Endothelial cell of umbilical vein (primary cell): ENCODE measurements at regions of chr7 and their contacts with region 1.

Region 1: GRCh38 chr7:50826371-50827172 is 43.9 kb upstream of the GRB10 start:
- DNase-seq: peak; percentile 97
- H3K4me3 ChIP-seq: peak overlapping the region in 1 of 3 experiments; percentile 20
- H3K27ac ChIP-seq: peak overlapping the region; percentile 99
- H3K4me1 ChIP-seq: peaks cover 34% of the 10 kb centered on the region
- H3K27me3 ChIP-seq: no peaks in the 10 kb centered on the region
- CTCF ChIP-seq: peak in 1 of 2 donors; percentile 14
- POLR2A ChIP-seq: peak; percentile 43

Region 2: GRCh38 chr7:50497068-50497642 is 329.4 kb before region 1 on chr7:
- CTCF ChIA-PET with region 1: no interaction called
- POLR2A ChIA-PET with region 1: no interaction called
- dilution Hi-C with region 1: no loop called
- intact Hi-C with region 1: no loop called
- DNase-seq: peak; percentile 99
- H3K4me3 ChIP-seq: peak overlapping the region in 1 of 3 experiments; percentile 4
- H3K27ac ChIP-seq: peak overlapping the region; percentile 99
- H3K4me1 ChIP-seq: peaks cover 40% of the 10 kb centered on the region
- H3K27me3 ChIP-seq: no peaks in the 10 kb centered on the region
- CTCF ChIP-seq: no peak
- POLR2A ChIP-seq: peak; percentile 67

Region 3: GRCh38 chr7:50728184-50728583 is 98.4 kb before region 1 on chr7:
- CTCF ChIA-PET with region 1: no interaction called
- POLR2A ChIA-PET with region 1: no interaction called
- dilution Hi-C with region 1: no loop called
- intact Hi-C with region 1: loop called (anchors 5 kb)
- DNase-seq: no peak
- H3K4me3 ChIP-seq: no peak overlapping the region
- H3K27ac ChIP-seq: peak overlapping the region; percentile 29
- H3K4me1 ChIP-seq: peaks cover 57% of the 10 kb centered on the region
- H3K27me3 ChIP-seq: no peaks in the 10 kb centered on the region
- CTCF ChIP-seq: no peak
- POLR2A ChIP-seq: no peak

Region 4: GRCh38 chr7:50838675-50839377 is 12.3 kb after region 1 on chr7:
- CTCF ChIA-PET with region 1: interaction called, 5 read pairs
- POLR2A ChIA-PET with region 1: no interaction called
- dilution Hi-C with region 1: no loop called
- intact Hi-C with region 1: loop called (anchors 1 kb)
- DNase-seq: peak; percentile 31
- H3K4me3 ChIP-seq: no peak overlapping the region
- H3K27ac ChIP-seq: peak overlapping the region; percentile 92
- H3K4me1 ChIP-seq: peaks cover 23% of the 10 kb centered on the region
- H3K27me3 ChIP-seq: no peaks in the 10 kb centered on the region
- CTCF ChIP-seq: no peak
- POLR2A ChIP-seq: no peak

Region 5: DNA sequence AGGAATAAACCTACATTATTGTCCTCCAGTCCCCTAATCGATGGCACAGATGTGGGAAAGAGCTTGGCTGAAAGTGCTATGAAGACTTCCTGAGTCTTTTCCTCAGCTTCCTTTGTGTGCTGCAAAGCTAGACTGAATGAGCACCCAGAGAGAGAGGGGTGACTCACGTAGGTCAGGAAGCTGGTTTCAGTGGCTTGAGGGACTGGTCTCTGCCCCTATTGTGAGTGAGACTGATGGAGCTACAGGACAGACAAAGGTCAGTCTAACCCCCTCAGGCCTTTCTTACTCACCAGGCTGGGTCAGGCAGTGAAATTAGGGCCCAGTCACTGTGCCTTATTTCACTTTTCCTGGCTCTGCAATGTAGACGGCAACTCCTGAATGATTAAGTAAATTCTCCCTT is 127.2 kb after region 1 on chr7:
- CTCF ChIA-PET with region 1: interaction called, 6 read pairs
- POLR2A ChIA-PET with region 1: no interaction called
- dilution Hi-C with region 1: no loop called
- intact Hi-C with region 1: loop called (anchors 1 kb)
- DNase-seq: peak; percentile 81
- H3K4me3 ChIP-seq: no peak overlapping the region
- H3K27ac ChIP-seq: peak overlapping the region; percentile 85
- H3K4me1 ChIP-seq: peaks cover 57% of the 10 kb centered on the region
- H3K27me3 ChIP-seq: no peaks in the 10 kb centered on the region
- CTCF ChIP-seq: no peak
- POLR2A ChIP-seq: peak; percentile 33

Region 6: GRCh38 chr7:51134013-51134441 is 307.5 kb after region 1 on chr7:
- CTCF ChIA-PET with region 1: no interaction called
- POLR2A ChIA-PET with region 1: no interaction called
- dilution Hi-C with region 1: no loop called
- intact Hi-C with region 1: loop called (anchors 1 kb)
- DNase-seq: peak; percentile 93
- H3K4me3 ChIP-seq: no peak overlapping the region
- H3K27ac ChIP-seq: peak overlapping the region; percentile 72
- H3K4me1 ChIP-seq: peaks cover 20% of the 10 kb centered on the region
- H3K27me3 ChIP-seq: no peaks in the 10 kb centered on the region
- CTCF ChIP-seq: no peak
- POLR2A ChIP-seq: no peak